AG04449 (cell line): ENCODE measurements at regions of chr11 and their contacts with region 1.

Region 1: GRCh38 chr11:132028380-132029240 is 658.2 kb downstream of the NTM start:
- DNase-seq: no peak
- H3K4me3 ChIP-seq: no peak overlapping the region
- CTCF ChIP-seq: peak; percentile 61

Region 2: DNA sequence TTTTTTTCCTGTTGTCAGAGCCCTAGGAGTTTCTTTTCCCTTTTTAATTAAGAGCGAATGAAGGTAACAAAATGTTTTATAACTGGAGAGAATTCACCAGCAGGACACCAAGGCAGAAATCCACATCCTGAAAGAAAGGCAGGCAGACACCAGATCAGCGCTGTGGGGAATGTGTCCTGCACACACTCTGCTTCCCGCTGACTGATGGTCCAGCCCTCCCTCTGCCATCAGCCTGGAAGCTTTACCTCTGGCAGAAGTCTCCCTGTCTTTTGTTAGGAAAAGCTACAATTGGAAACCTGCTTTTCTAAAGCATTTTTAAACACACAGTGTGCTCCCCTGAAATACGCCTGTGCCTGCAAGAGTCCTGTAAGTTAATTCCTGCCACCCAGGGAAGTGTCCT is 19.7 kb before region 1 on chr11:
- CTCF ChIA-PET with region 1: interaction called, 12 read pairs
- POLR2A ChIA-PET with region 1: no interaction called
- DNase-seq: no peak
- H3K4me3 ChIP-seq: no peak overlapping the region
- CTCF ChIP-seq: no peak

Region 3: GRCh38 chr11:132042296-132042695 is 13.7 kb after region 1 on chr11:
- CTCF ChIA-PET with region 1: interaction called, 69 read pairs
- POLR2A ChIA-PET with region 1: no interaction called
- DNase-seq: no peak
- H3K4me3 ChIP-seq: no peak overlapping the region
- CTCF ChIP-seq: no peak

Region 4: DNA sequence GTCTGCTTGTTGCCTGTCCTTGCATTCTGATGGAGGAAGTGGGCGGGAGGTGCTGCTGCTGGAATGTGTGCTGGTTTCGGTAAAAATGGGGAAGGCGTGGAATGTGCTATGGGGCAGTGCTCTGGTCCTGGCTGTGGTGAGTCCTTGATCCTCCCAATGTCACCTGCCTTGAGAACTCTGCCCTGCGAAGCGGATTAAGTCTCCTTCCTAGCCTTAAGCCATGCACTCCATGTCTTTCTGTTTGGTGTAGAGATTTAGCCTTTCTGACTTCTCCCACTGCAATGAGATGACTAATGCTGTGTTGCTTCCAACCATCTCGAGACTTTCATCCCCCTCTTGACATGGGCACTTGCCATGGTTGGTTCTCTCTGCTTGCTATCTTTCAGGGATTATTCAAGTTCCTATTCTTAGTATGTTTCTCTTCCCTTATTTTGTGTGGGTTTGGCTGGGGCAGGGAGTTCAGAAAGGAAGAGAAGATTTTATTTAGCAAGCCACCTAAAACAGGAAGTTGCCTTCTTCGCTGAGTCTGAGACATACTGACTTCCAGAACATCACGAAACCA is 29.7 kb after region 1 on chr11:
- CTCF ChIA-PET with region 1: interaction called, 49 read pairs
- POLR2A ChIA-PET with region 1: interaction called, 3 read pairs
- DNase-seq: no peak
- H3K4me3 ChIP-seq: no peak overlapping the region
- CTCF ChIP-seq: no peak

Region 5: GRCh38 chr11:132064987-132065620 is 36.5 kb after region 1 on chr11:
- CTCF ChIA-PET with region 1: interaction called, 10 read pairs
- POLR2A ChIA-PET with region 1: interaction called, 3 read pairs
- DNase-seq: peak; percentile 100
- H3K4me3 ChIP-seq: no peak overlapping the region
- CTCF ChIP-seq: no peak